ENCODE measurements at regions of chr1 and their contacts with region 1.

Region 1: GRCh38 chr1:201229771-201230635 is 39.4 kb downstream of the IGFN1 start:
- DNase-seq: no peak
- ATAC-seq: no peak

Region 2: DNA sequence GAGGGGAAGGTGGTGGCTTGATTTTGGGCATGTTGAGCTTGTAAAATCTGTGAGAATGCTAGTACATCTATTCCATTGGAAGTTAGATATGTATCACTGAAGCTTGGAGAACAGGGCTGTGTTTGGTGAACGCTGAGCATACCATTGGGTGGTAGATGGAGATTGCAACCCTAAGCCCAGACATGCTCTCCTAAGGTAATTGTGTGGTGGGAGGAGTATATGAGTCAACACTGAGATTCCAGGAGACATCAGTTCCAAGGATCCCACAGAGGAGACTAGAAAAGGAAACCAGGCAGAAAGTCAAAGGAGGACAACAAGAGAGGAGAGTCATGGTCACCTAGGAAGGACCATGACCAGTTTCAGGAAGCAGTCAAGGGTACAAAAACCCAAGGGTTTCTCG is 266.9 kb before region 1 on chr1:
- intact Hi-C with region 1: no loop called
- DNase-seq: no peak
- ATAC-seq: no peak

Region 3: GRCh38 chr1:201149400-201149799 is 80.6 kb before region 1 on chr1:
- intact Hi-C with region 1: loop called in 1 of 2 experiments (anchors 10 kb)
- DNase-seq: no peak
- ATAC-seq: peak; percentile 44

Measured in left colon (tissue), 2 donors.